ENCODE measurements at regions of chr12 and their contacts with region 1.

Region 1: DNA sequence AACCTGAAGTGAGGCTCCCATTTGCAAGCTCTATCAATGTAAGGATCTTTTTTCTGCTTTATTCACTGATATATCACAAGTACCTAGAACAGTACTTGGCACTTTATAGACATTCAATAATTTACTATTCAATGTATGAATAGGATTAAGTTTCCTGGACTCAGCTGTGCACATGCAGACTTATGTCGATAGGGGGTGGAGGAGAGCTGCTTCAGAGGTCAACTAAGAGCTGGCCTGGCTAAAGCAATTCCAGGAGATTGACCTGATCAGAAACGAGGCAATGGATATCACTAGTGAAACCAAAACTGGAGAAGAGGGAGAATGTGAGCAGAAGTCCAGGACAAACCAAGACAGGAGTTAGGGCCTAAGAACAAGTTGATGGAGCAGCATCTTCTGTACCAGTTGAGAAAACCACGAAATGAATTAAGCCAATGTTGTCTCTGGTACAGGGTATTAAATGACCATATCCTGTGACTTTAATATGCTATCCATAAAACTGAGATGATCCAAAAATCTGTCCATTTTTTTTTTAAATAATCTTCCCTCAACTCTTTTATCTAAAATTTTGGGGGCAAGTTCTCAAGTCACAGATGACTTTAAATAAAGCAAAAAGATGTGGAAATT is 169.2 kb downstream of the PIK3C2G start:
- DNase-seq: peak; percentile 71 to 79
- H3K4me3 ChIP-seq: no peak overlapping the region
- H3K4me1 ChIP-seq: peaks cover 5% of the 10 kb centered on the region
- H3K27me3 ChIP-seq: no peaks in the 10 kb centered on the region

Region 2: DNA sequence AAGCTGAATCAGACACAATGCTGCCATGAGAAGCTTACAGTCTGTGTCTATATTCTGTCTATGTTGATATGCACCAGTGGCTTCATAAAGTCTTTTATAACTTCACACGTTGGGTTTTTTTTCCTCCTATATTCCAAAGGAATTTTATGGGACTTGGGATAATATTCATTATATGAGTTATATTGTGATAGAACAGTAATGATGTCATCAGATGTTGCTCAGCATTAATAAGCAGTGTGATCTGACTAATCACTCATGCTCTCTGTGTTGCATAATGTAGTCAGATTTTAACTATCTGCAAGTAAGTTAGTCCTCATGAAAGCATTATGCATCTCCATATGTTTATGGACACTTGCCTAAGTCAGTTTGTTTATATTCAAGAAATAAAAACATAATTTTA is 147.7 kb after region 1 on chr12:
- in situ Hi-C with region 1: no loop called
- DNase-seq: no peak
- H3K4me3 ChIP-seq: no peak overlapping the region
- H3K4me1 ChIP-seq: no peaks in the 10 kb centered on the region
- H3K27me3 ChIP-seq: no peaks in the 10 kb centered on the region

Region 3: DNA sequence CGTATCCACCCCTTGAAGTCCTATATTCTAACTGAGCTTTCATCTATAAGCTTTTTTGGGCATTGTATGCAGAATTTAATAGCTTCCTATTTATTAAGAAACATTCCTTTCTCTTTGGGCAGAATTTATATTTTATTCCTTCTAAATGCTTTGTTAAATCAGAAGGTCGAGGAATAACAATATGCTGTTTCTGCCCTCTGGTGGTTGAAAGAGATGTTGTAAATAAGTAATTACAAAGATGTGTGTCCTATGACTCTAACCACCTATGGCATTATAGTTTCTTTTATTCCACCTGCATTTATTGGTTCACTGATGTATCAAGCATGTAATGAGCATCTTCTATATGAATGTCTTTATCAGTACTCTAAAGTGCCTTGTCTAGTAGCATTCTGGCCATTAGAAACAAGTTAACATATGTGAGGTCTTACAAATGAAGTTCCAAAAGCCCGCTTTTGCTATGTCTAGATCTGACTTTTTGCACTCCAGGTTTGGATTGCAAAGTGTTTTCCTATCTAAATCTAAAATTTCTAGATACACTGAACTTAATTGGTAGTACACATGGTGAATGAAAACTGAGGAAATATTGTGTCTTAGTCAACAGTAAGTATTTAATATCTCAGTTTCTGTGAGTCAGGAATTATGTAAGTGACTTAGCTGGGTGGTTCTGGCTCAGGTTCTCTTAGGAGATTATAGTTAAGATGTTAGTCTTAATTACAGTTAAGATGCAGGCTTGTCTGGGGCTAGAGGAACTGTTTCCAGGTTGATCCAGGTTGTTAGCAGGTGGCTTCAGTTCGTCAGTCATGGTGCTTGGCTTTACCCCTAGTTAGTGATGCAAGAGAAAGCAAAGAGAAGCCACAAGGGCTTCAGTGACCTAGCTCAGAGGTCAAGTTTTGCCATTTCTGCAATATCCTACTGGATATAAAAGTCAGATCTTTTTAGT is 756.5 kb after region 1 on chr12:
- in situ Hi-C with region 1: loop called (anchors 25 kb)
- DNase-seq: peak in 1 of 2 experiments; percentile 59
- H3K4me3 ChIP-seq: no peak overlapping the region
- H3K4me1 ChIP-seq: peaks cover 33% of the 10 kb centered on the region
- H3K27me3 ChIP-seq: no peaks in the 10 kb centered on the region